Ascending aorta (tissue), 2 donors: ENCODE measurements at regions of chr12 and their contacts with region 1.

Region 1: GRCh38 chr12:7079826-7080125 is 12.5 kb downstream of the C1R start:
- DNase-seq: no peak
- H3K4me3 ChIP-seq: no peak overlapping the region
- H3K27ac ChIP-seq: peak overlapping the region; percentile 74 to 83
- H3K4me1 ChIP-seq: peaks cover 3 to 11% of the 10 kb centered on the region in 2 donors
- H3K27me3 ChIP-seq: no peaks in the 10 kb centered on the region
- CTCF ChIP-seq: no peak

Region 2: GRCh38 chr12:7092229-7092985 is 12.6 kb after region 1 on chr12 and contains the start of gene C1R:
- intact Hi-C with region 1: loop called (anchors 1 kb)
- DNase-seq: peak; percentile 48 to 92
- H3K4me3 ChIP-seq: peak within 1 kb of the TSS; percentile 51 to 62
- H3K27ac ChIP-seq: peak within 1 kb of the TSS; percentile 77 to 79
- H3K4me1 ChIP-seq: peaks cover 0 to 12% of the 10 kb centered on the region in 2 donors
- H3K27me3 ChIP-seq: no peaks in the 10 kb centered on the region
- CTCF ChIP-seq: peak; percentile 86 to 91 (median 87)
- total RNA-seq, gene C1R: 1,046 TPM

Region 3: GRCh38 chr12:7583571-7583970 is 503.8 kb after region 1 on chr12:
- intact Hi-C with region 1: no loop called
- DNase-seq: no peak
- H3K4me3 ChIP-seq: no peak overlapping the region
- H3K27ac ChIP-seq: no peak overlapping the region
- H3K4me1 ChIP-seq: no peaks in the 10 kb centered on the region
- H3K27me3 ChIP-seq: no peaks in the 10 kb centered on the region
- CTCF ChIP-seq: no peak